ENCODE measurements at regions of chr5 and their contacts with region 1.

Region 1: DNA sequence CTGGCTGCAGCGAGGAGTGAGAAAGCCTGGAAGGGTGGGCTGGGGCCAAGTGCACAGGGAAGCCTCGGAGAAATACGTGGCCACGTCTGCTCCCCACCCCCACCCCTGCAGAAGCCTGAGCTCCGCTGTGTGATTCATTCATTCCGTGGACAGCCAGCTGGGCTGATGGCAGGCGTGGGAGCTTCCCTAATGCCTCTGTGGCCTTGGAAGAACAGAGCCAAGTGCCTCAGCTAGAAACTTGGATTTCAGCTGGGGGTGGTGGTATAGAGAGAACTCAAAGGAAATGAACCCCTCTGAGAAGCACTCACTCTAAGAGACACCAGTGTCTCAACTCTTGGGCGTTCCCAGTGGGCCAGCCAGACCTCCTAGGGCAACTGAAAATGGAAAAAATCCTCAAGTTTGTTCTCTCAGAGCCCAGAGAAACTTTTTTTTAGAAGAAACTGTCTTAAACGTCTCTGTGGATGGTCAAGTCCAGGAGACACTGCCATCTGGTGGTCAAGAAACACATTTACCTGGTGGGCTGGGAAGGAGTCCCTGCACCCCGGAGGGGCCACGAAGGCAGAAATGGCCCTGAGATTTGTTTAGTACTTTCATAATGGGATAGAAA is 18.0 kb downstream of the ATOX1 start:
- DNase-seq: peak; percentile 78 to 83
- ATAC-seq: peak; percentile 75 to 83
- H3K4me3 ChIP-seq: no peak overlapping the region
- H3K27ac ChIP-seq: peak overlapping the region; percentile 68 to 92
- H3K4me1 ChIP-seq: peaks cover 37% of the 10 kb centered on the region
- CTCF ChIP-seq: peak; percentile 95
- EP300 ChIP-seq: no peak
- POLR2A ChIP-seq: no peak
- RAD21 ChIP-seq: peak; percentile 79 to 87

Region 2: DNA sequence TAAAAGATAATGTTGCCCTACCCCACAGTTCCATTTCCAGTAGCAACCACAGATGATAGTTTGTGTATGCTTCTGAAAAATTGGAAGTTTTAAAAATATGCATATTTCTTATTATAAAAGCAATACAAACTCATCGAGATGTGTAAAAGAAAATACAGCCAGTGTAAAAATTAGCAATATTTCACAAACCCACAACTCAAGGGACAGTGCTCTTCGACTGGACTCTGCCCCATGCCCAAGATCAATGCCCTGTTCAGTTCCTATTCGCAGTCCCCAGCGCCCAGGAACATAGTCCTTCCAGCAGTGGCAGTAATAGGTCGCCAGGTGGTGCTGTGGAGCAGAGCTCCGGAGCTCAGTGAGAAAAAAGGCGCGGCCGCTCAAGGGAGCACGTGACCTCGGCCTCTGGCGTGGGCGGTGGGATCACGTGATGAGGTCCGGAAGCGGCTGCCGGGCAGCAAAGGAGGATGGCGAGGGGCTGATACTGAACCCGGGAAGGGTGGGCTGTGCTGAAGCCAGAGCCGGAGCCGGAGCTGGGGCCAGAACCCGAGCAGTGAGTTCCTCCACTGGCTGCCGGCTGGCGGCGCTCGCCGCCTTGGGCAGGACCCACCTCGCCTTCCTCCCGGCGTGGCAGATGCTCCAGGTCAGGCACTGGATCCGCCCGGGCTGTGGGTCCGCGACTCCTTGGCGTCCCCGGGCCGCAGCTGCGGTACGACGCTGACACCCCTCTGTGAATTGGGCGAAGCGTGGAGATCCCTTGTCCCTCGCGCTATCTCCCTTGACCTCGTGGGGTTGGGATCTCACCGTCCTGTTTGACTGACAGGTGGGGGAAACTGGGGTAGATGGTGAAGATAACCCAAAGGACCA is 293.0 kb before region 1 on chr5 and contains the start of gene SLC36A1:
- CTCF ChIA-PET with region 1: interaction called, 10 read pairs
- POLR2A ChIA-PET with region 1: no interaction called
- DNase-seq: peak; percentile 89 to 90
- ATAC-seq: peak; percentile 85 to 95
- H3K4me3 ChIP-seq: peak within 1 kb of the TSS; percentile 75
- H3K27ac ChIP-seq: peak within 1 kb of the TSS; percentile 72 to 89
- H3K4me1 ChIP-seq: peaks cover 16% of the 10 kb centered on the region
- CTCF ChIP-seq: peak; percentile 92
- EP300 ChIP-seq: no peak
- POLR2A ChIP-seq: peak; percentile 49; the same call in 1 of the 2 replicates
- RAD21 ChIP-seq: peak; percentile 74 to 86
- polyA plus RNA-seq, gene SLC36A1: 10.8 and 12.4 TPM in 2 replicates

Region 3: DNA sequence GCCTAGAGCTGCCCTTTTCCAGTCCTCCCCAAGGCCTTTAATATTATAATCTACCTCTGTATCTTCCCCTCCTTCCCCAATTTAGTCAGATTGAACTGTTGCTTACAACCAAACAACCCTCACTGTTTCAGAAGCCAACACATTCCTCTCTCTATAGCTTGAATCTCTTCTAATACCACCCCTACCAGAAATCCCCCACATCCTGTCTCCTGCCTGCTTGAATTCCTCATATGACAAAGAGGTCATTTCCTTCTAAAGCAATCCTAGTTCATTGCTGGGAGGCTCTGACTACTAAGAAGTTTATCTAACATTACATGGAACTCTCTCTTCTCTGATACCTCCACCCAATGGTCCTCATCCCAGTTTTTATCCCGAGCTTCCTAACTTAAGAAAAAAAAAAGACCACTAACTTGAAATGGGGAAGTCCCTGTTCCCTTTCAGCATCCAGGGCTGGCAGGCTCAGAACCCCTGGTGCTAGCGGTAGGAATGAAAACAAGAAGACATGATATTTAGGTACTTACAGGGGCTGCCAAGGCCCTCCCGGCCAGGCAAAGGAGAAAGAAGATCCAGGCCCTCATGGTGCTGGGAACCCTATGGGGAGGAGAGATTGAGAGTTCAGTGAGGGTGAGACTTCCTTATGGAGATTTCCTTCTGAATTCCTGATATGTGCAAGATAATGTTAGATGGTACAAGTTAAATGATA is 64.7 kb before region 1 on chr5:
- CTCF ChIA-PET with region 1: interaction called, 22 read pairs
- POLR2A ChIA-PET with region 1: no interaction called
- DNase-seq: no peak
- ATAC-seq: no peak
- H3K4me3 ChIP-seq: no peak overlapping the region
- H3K27ac ChIP-seq: peak overlapping the region in 1 of 2 experiments; percentile 11; a peak in 2 of 6 replicates
- H3K4me1 ChIP-seq: peaks cover 20% of the 10 kb centered on the region
- CTCF ChIP-seq: no peak
- EP300 ChIP-seq: no peak
- POLR2A ChIP-seq: no peak
- RAD21 ChIP-seq: no peak

Region 4: GRCh38 chr5:151692320-151692719 is 48.1 kb before region 1 on chr5:
- CTCF ChIA-PET with region 1: interaction called, 19 read pairs
- POLR2A ChIA-PET with region 1: no interaction called
- DNase-seq: no peak
- ATAC-seq: no peak; a peak in 1 of 6 replicates
- H3K4me3 ChIP-seq: no peak overlapping the region
- H3K27ac ChIP-seq: peak overlapping the region in 1 of 2 experiments; percentile 71; a peak in 4 of 6 replicates
- H3K4me1 ChIP-seq: peaks cover 10% of the 10 kb centered on the region
- CTCF ChIP-seq: no peak
- EP300 ChIP-seq: no peak
- POLR2A ChIP-seq: no peak
- RAD21 ChIP-seq: no peak

Region 5: DNA sequence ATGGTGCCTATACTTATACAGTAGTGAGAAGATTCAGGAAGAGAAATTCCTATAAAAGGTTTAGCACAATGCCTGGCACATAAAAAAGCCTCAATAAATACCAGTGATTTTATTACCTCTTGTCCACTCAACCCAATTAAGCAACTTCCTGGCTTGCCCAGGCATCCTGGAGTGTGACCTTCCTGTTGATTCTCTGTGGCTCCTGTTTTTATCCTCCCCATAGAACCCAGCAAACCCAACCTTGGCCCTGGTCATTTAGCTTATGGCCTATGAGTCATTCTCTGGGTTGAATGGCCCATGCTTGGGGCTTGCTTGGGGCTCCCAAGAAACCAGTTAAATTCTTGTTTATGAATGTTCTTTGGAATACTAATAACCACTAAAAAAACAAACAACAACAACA is 32.3 kb before region 1 on chr5:
- CTCF ChIA-PET with region 1: interaction called, 14 read pairs
- POLR2A ChIA-PET with region 1: no interaction called
- DNase-seq: no peak
- ATAC-seq: no peak
- H3K4me3 ChIP-seq: no peak overlapping the region
- H3K27ac ChIP-seq: no peak overlapping the region
- H3K4me1 ChIP-seq: peaks cover 10% of the 10 kb centered on the region; the same call in 2 of the 3 replicates
- CTCF ChIP-seq: no peak
- EP300 ChIP-seq: no peak
- POLR2A ChIP-seq: no peak
- RAD21 ChIP-seq: no peak

Region 6: GRCh38 chr5:151730384-151730783 is 10.1 kb before region 1 on chr5:
- CTCF ChIA-PET with region 1: interaction called, 10 read pairs
- POLR2A ChIA-PET with region 1: no interaction called
- DNase-seq: no peak
- ATAC-seq: no peak
- H3K4me3 ChIP-seq: no peak overlapping the region
- H3K27ac ChIP-seq: peak overlapping the region; percentile 56 to 85; a peak in 5 of 6 replicates
- H3K4me1 ChIP-seq: peaks cover 10% of the 10 kb centered on the region; the same call in 2 of the 3 replicates
- CTCF ChIP-seq: no peak
- EP300 ChIP-seq: no peak
- POLR2A ChIP-seq: no peak
- RAD21 ChIP-seq: no peak

Region 7: GRCh38 chr5:151758430-151759241 is 18.2 kb after region 1 on chr5 and contains the start of gene ATOX1:
- CTCF ChIA-PET with region 1: interaction called, 56 read pairs
- POLR2A ChIA-PET with region 1: no interaction called
- DNase-seq: peak; percentile 87 to 96
- ATAC-seq: peak; percentile 96 to 99
- H3K4me3 ChIP-seq: peak within 1 kb of the TSS; percentile 91
- H3K27ac ChIP-seq: peak within 1 kb of the TSS; percentile 85 to 93
- H3K4me1 ChIP-seq: peaks cover 12% of the 10 kb centered on the region
- CTCF ChIP-seq: no peak
- EP300 ChIP-seq: no peak
- POLR2A ChIP-seq: peak; percentile 85
- RAD21 ChIP-seq: no peak
- polyA plus RNA-seq, gene ATOX1: 58.1 and 78.8 TPM in 2 replicates

Region 8: GRCh38 chr5:152226191-152226590 is 485.8 kb after region 1 on chr5:
- CTCF ChIA-PET with region 1: no interaction called
- POLR2A ChIA-PET with region 1: no interaction called
- DNase-seq: no peak
- ATAC-seq: no peak
- H3K4me3 ChIP-seq: no peak overlapping the region
- H3K27ac ChIP-seq: no peak overlapping the region
- H3K4me1 ChIP-seq: no peaks in the 10 kb centered on the region
- CTCF ChIP-seq: no peak
- EP300 ChIP-seq: no peak
- POLR2A ChIP-seq: no peak
- RAD21 ChIP-seq: no peak